B cell (primary cell): ENCODE measurements at regions of chr3 and their contacts with region 1.

Region 1: GRCh38 chr3:49093853-49094767 is at the start of gene QRICH1:
- DNase-seq: peak; percentile 99
- ATAC-seq: peak; percentile 77
- H3K4me3 ChIP-seq: peak within 1 kb of the TSS; percentile 72 to 95 (median 88)
- H3K4me3 Mint-ChIP-seq: peak within 1 kb of the TSS; percentile 97
- H3K27ac ChIP-seq: peak within 1 kb of the TSS; percentile 87 to 94
- H3K27ac Mint-ChIP-seq: peak within 1 kb of the TSS; percentile 99
- H3K4me1 ChIP-seq: peaks cover 26 to 33% of the 10 kb centered on the region in 2 donors
- H3K4me1 Mint-ChIP-seq: peaks cover 37% of the 10 kb centered on the region
- H3K27me3 ChIP-seq: no peaks in the 10 kb centered on the region
- H3K27me3 Mint-ChIP-seq: no peaks in the 10 kb centered on the region
- CTCF ChIP-seq: peak; percentile 71
- total RNA-seq, gene QRICH1: 187 and 196 TPM in 2 replicates

Region 2: GRCh38 chr3:48716982-48717746 is 376.9 kb before region 1 on chr3 and contains the start of gene IP6K2:
- CTCF ChIA-PET with region 1: no interaction called
- POLR2A ChIA-PET with region 1: no interaction called
- intact Hi-C with region 1: loop called (anchors 1 kb)
- DNase-seq: peak; percentile 97
- ATAC-seq: peak; percentile 99
- H3K4me3 ChIP-seq: peak within 1 kb of the TSS; percentile 90 to 99 (median 95)
- H3K4me3 Mint-ChIP-seq: peak within 1 kb of the TSS; percentile 98
- H3K27ac ChIP-seq: peak within 1 kb of the TSS; percentile 74 to 77
- H3K27ac Mint-ChIP-seq: peak within 1 kb of the TSS; percentile 93
- H3K4me1 ChIP-seq: peaks cover 18 to 20% of the 10 kb centered on the region in 2 donors
- H3K4me1 Mint-ChIP-seq: peaks cover 33% of the 10 kb centered on the region
- H3K27me3 ChIP-seq: no peaks in the 10 kb centered on the region
- H3K27me3 Mint-ChIP-seq: no peaks in the 10 kb centered on the region
- CTCF ChIP-seq: no peak
- total RNA-seq, gene IP6K2: 138 and 140 TPM in 2 replicates

Region 3: GRCh38 chr3:48989796-48990635 is 104.1 kb before region 1 on chr3 and contains the start of gene P4HTM:
- CTCF ChIA-PET with region 1: interaction called, 51 read pairs
- POLR2A ChIA-PET with region 1: interaction called, 3 read pairs
- intact Hi-C with region 1: loop called (anchors 1 kb)
- DNase-seq: peak; percentile 74
- ATAC-seq: peak; percentile 66
- H3K4me3 ChIP-seq: peak within 1 kb of the TSS; percentile 65 to 86 (median 74)
- H3K4me3 Mint-ChIP-seq: peak within 1 kb of the TSS; percentile 96
- H3K27ac ChIP-seq: peak within 1 kb of the TSS; percentile 24 to 66
- H3K27ac Mint-ChIP-seq: peak within 1 kb of the TSS; percentile 95
- H3K4me1 ChIP-seq: peaks cover 18 to 21% of the 10 kb centered on the region in 2 donors
- H3K4me1 Mint-ChIP-seq: peaks cover 28% of the 10 kb centered on the region
- H3K27me3 ChIP-seq: no peaks in the 10 kb centered on the region
- H3K27me3 Mint-ChIP-seq: no peaks in the 10 kb centered on the region
- CTCF ChIP-seq: no peak
- total RNA-seq, gene P4HTM: 48.5 and 56.4 TPM in 2 replicates

Region 4: GRCh38 chr3:49028673-49029562 is 65.2 kb before region 1 on chr3 and contains the start of gene IMPDH2:
- CTCF ChIA-PET with region 1: no interaction called
- POLR2A ChIA-PET with region 1: interaction called, 10 read pairs
- intact Hi-C with region 1: loop called (anchors 1 kb)
- DNase-seq: peak; percentile 98
- ATAC-seq: peak; percentile 93
- H3K4me3 ChIP-seq: peak within 1 kb of the TSS; percentile 72 to 93 (median 73)
- H3K4me3 Mint-ChIP-seq: peak within 1 kb of the TSS; percentile 98
- H3K27ac ChIP-seq: peak within 1 kb of the TSS; percentile 86 to 92
- H3K27ac Mint-ChIP-seq: peak within 1 kb of the TSS; percentile 98
- H3K4me1 ChIP-seq: peaks cover 14 to 39% of the 10 kb centered on the region in 2 donors
- H3K4me1 Mint-ChIP-seq: peaks cover 45% of the 10 kb centered on the region
- H3K27me3 ChIP-seq: no peaks in the 10 kb centered on the region
- H3K27me3 Mint-ChIP-seq: no peaks in the 10 kb centered on the region
- CTCF ChIP-seq: no peak
- total RNA-seq, gene IMPDH2: 186 and 193 TPM in 2 replicates

Region 5: DNA sequence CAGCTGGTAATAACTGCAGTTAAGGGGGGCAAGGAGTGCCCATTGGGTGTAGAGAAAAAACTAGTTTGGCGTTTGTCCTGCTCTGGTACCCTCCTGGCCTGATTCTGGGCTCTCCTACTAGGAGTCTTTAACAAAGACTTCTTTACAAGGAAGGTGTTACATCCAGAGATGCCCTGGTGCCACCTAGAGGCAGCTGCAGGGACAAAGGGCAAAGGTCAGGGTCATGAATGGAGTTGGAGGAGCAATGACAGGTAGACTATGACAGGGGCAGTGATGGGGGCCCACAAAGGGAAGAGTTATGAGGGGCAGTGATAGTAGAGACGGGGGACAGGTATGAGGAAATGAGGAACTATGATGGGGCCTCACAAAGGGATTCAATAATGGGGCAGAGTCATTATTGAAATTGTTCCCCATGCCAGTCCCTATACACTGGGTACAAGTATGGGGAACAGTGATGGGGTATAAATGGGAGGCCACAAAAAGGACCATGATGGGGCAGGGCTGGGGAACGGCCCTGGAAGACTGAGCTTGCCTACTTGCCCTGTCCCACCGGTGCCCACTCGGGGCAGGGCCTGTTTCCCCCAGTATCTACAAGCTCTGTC is 64.1 kb after region 1 on chr3:
- CTCF ChIA-PET with region 1: interaction called, 13 read pairs
- POLR2A ChIA-PET with region 1: no interaction called
- intact Hi-C with region 1: loop called (anchors 2 kb)
- DNase-seq: peak; percentile 69
- ATAC-seq: peak; percentile 89
- H3K4me3 ChIP-seq: no peak overlapping the region
- H3K4me3 Mint-ChIP-seq: no peak overlapping the region
- H3K27ac ChIP-seq: peak overlapping the region in 1 of 2 donors; percentile 15
- H3K27ac Mint-ChIP-seq: no peak overlapping the region
- H3K4me1 ChIP-seq: no peaks in the 10 kb centered on the region
- H3K4me1 Mint-ChIP-seq: peaks cover 4% of the 10 kb centered on the region
- H3K27me3 ChIP-seq: no peaks in the 10 kb centered on the region
- H3K27me3 Mint-ChIP-seq: no peaks in the 10 kb centered on the region
- CTCF ChIP-seq: peak; percentile 52

Region 6: DNA sequence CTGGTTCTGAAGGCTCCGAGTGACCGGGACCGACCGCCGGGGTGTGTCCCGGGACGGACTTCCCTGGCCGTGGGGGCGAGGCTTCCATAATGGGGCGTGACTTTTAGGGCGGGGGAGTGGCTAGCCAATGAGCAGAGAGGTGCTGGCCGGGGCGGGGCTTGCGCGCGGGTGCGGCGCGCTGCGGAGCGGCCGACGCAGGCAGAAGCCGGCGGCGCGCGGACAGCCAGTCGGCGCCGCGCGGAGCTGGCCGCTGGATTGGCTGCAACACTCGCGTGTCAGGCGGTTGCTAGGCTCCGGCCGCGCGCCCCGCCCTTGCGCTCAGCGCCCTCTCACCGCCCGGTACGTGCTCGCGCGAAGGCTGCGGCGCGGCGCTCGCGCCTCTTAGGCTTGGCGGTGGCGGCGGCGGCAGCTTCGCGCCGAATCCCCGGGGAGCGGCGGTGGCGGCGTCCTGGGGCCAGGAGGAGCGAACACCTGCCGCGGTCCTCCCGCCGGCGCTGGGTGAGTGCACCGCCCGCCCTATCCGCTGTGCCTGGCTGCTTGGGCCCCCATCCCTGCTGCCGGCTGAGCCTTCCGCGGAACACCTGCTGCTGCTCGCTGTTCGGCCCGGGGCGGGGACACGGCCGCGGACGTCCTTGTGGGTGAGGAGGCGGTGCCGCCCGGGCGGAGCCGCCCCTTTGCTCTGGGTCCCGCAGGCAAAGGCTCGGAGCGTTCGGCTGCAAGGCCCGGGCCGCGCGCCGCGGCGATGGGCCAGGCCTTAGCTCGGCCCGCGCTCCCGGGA is 376.0 kb after region 1 on chr3 and contains the start of gene DAG1:
- CTCF ChIA-PET with region 1: no interaction called
- POLR2A ChIA-PET with region 1: interaction called, 7 read pairs
- intact Hi-C with region 1: loop called (anchors 1 kb)
- DNase-seq: peak; percentile 98
- ATAC-seq: peak; percentile 83
- H3K4me3 ChIP-seq: peak within 1 kb of the TSS; percentile 56 to 94 (median 70)
- H3K4me3 Mint-ChIP-seq: peak within 1 kb of the TSS; percentile 95
- H3K27ac ChIP-seq: peak within 1 kb of the TSS; percentile 90 to 94
- H3K27ac Mint-ChIP-seq: peak within 1 kb of the TSS; percentile 97
- H3K4me1 ChIP-seq: peaks cover 22 to 24% of the 10 kb centered on the region in 2 donors
- H3K4me1 Mint-ChIP-seq: peaks cover 21% of the 10 kb centered on the region
- H3K27me3 ChIP-seq: no peaks in the 10 kb centered on the region
- H3K27me3 Mint-ChIP-seq: no peaks in the 10 kb centered on the region
- CTCF ChIP-seq: no peak
- total RNA-seq, gene DAG1: 27.2 and 27.3 TPM in 2 replicates